ENCODE measurements at regions of chr2 and their contacts with region 1.

Region 1: DNA sequence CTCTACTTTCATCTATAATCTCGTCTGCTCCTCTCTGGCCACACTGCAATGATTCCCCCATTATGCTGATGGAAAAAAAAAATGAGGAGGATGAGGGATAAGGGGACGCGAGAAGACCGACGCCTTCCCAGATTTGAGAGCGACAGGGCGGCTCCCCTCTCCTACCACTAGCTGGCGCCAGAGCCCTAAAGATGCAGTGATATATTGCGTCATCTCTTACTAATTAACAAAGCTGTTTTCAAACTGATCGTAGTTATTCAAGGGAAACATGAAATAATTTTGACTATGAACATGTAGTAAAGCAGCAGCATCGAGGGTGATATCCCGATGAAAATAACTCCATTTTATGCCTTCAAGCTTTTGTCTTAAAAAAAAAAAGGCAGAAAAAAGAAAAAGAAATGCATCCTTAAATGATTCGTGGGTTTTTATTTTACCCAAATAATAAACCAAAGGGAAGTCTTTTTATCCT is 48.0 kb upstream of the HNRNPA3 start:
- DNase-seq: peak; percentile 83 to 91 (median 90)
- H3K4me3 ChIP-seq: peak overlapping the region; percentile 22
- H3K27ac ChIP-seq: peak overlapping the region; percentile 13 to 91
- H3K4me1 ChIP-seq: peaks cover 3% of the 10 kb centered on the region
- H3K27me3 ChIP-seq: no peaks in the 10 kb centered on the region
- CTCF ChIP-seq: peak; percentile 92 to 98 (median 97)
- EP300 ChIP-seq: no peak
- POLR2A ChIP-seq: no peak

Region 2: GRCh38 chr2:177207101-177207500 is 42.5 kb after region 1 on chr2:
- intact Hi-C with region 1: loop called in 2 of 4 experiments (anchors 5 kb)
- DNase-seq: no peak
- H3K4me3 ChIP-seq: no peak overlapping the region
- H3K27ac ChIP-seq: no peak overlapping the region
- H3K4me1 ChIP-seq: no peaks in the 10 kb centered on the region
- H3K27me3 ChIP-seq: no peaks in the 10 kb centered on the region
- CTCF ChIP-seq: no peak
- EP300 ChIP-seq: no peak
- POLR2A ChIP-seq: no peak

Region 3: GRCh38 chr2:177263451-177264208 is 99.0 kb after region 1 on chr2:
- intact Hi-C with region 1: loop called in 3 of 4 experiments (anchors 2 to 10 kb)
- DNase-seq: peak; percentile 99 to 100 (median 99)
- H3K4me3 ChIP-seq: peak overlapping the region; percentile 100
- H3K27ac ChIP-seq: peak overlapping the region; percentile 100
- H3K4me1 ChIP-seq: peaks cover 10% of the 10 kb centered on the region
- H3K27me3 ChIP-seq: no peaks in the 10 kb centered on the region
- CTCF ChIP-seq: peak; percentile 90 to 97 (median 97)
- EP300 ChIP-seq: peak; percentile 79
- POLR2A ChIP-seq: peak; percentile 79

Region 4: GRCh38 chr2:177419274-177419673 is 254.7 kb after region 1 on chr2:
- intact Hi-C with region 1: loop called in 1 of 4 experiments (anchors 10 kb)
- DNase-seq: no peak
- H3K4me3 ChIP-seq: no peak overlapping the region
- H3K27ac ChIP-seq: no peak overlapping the region
- H3K4me1 ChIP-seq: no peaks in the 10 kb centered on the region
- H3K27me3 ChIP-seq: no peaks in the 10 kb centered on the region
- CTCF ChIP-seq: no peak
- EP300 ChIP-seq: no peak
- POLR2A ChIP-seq: no peak

Region 5: GRCh38 chr2:177763532-177764265 is 599.1 kb after region 1 on chr2:
- intact Hi-C with region 1: loop called in 2 of 4 experiments (anchors 10 kb)
- DNase-seq: peak; percentile 60 to 78 (median 73)
- H3K4me3 ChIP-seq: no peak overlapping the region
- H3K27ac ChIP-seq: no peak overlapping the region
- H3K4me1 ChIP-seq: peaks cover 3% of the 10 kb centered on the region
- H3K27me3 ChIP-seq: no peaks in the 10 kb centered on the region
- CTCF ChIP-seq: peak; percentile 34 to 49 (median 47)
- EP300 ChIP-seq: no peak
- POLR2A ChIP-seq: no peak